Panc1 (cell line): ENCODE measurements at regions of chr5 and their contacts with region 1.

Region 1: DNA sequence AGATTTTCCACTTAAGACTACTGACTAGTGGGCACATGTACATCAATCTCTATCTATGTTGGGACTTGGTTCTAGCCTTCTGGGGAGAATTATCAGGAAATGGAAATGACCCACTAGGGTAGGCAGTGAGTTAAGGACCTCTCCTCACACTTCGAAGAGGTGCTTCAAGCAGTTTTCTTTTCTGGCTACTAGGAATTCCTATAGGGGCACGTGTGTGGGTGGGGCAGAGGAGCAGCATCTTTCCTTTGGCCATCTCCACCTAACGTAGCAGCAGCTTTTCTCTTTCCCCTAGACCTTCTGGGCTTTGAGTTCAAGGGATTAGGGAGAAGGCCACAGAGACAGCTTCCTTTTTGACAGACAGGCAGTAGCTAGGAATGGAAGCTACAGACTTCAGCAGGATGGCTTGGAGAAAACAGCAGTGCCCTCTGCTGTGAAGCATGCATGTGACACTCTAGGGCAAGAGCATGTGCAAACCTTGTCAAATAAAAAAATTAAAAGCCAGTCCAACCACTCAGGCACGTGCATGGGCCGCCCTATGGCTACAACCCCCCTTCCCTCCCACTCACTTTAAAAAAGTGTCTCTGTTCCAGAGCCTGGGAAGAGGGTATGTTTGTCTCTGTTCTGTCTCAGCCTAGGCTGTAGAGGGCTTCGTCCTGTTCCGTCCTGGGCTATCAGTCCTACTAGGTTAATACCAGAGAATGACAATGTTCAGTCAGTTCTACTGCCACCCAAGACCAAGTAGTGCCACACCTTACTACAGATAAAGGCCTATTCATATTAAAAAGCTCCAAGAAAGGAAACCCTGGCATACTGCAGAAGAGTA is 8.7 kb upstream of the GFRA3 start:
- DNase-seq: peak; percentile 13
- ATAC-seq: peak; percentile 94
- H3K4me3 ChIP-seq: no peak overlapping the region
- H3K27ac ChIP-seq: no peak overlapping the region
- H3K4me1 ChIP-seq: no peaks in the 10 kb centered on the region
- H3K27me3 ChIP-seq: no peaks in the 10 kb centered on the region
- CTCF ChIP-seq: peak; percentile 79

Region 2: DNA sequence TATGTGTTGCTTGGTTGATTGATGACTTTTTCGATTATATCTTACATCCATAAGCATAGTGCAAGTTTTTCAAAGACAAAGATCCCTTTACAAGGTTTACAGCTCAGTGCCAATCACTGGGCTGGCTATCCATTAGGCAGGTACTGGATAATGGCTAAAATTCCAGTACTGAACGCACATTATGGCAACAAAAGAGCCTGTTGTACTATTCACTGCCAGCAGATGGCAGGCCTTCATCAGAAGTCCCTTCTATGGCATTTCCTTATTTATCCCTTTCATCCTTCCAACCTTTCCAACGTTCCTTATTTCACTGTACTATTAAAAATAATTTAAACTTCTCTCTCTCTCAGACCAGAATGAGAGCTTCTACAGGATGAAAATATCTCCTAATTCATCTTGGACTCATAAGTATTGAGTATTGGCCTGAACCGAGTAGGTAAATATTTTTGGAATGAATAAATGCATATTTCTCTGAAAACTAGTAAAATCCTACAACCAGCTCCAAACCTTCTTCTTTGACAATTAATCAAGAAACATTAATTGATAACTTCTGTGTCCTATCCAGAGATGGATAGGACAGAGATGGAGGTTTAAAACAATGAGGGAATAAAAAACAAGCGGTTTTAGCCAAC is 205.9 kb before region 1 on chr5:
- CTCF ChIA-PET with region 1: no interaction called
- POLR2A ChIA-PET with region 1: interaction called, 10 read pairs
- in situ Hi-C with region 1: no loop called
- intact Hi-C with region 1: no loop called
- DNase-seq: peak; percentile 66
- ATAC-seq: peak; percentile 92
- H3K4me3 ChIP-seq: no peak overlapping the region
- H3K27ac ChIP-seq: no peak overlapping the region; the same call in 1 of the 2 replicates
- H3K4me1 ChIP-seq: no peaks in the 10 kb centered on the region
- H3K27me3 ChIP-seq: no peaks in the 10 kb centered on the region
- CTCF ChIP-seq: peak; percentile 85

Region 3: DNA sequence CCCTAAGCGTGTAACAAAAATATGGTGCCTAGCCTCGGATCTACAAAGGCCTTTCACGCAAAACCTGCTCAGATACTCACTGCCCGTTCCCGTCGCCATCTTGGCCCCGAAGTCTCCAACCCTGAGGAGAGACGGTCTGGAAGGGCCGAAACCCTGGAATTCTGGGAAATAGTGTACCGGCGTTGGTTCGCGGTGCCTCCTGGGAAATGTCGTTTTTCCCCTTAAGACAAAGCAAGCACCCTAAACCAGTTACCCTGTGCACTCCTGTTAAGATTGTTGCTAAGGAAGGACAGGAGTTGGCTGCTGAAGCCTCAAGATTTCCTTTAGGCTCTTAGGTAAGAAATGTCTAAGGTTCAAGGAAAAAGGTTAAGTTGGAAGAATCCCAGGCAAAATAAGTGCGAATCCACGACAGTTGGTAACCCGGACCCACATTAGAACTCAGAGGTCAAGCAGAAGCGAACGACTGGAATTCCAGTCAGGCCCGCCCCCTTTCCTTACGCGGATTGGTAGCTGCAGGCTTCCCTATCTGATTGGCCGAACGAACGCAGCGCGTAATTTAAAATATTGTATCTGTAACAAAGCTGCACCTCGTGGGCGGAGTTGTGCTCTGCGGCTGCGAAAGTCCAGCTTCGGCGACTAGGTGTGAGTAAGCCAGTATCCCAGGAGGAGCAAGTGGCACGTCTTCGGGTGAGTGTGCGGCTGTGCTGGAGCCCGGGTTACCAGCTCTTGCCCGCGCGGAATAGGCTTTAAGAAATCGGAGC is 104.4 kb before region 1 on chr5 and contains the starts of genes BRD8 and KIF20A:
- CTCF ChIA-PET with region 1: interaction called, 4 read pairs
- POLR2A ChIA-PET with region 1: no interaction called
- in situ Hi-C with region 1: no loop called
- intact Hi-C with region 1: loop called (anchors 2 kb)
- DNase-seq: peak; percentile 98
- ATAC-seq: peak; percentile 94
- H3K4me3 ChIP-seq: peak within 1 kb of the TSS; percentile 93 to 97
- H3K27ac ChIP-seq: peak within 1 kb of the TSS; percentile 100
- H3K4me1 ChIP-seq: peaks cover 22% of the 10 kb centered on the region
- H3K27me3 ChIP-seq: no peaks in the 10 kb centered on the region
- CTCF ChIP-seq: no peak
- total RNA-seq, gene BRD8: 92.1 TPM
- total RNA-seq, gene KIF20A: 55.4 TPM

Region 4: GRCh38 chr5:138223532-138223931 is 59.6 kb before region 1 on chr5:
- CTCF ChIA-PET with region 1: interaction called, 11 read pairs
- POLR2A ChIA-PET with region 1: interaction called, 3 read pairs
- in situ Hi-C with region 1: no loop called
- intact Hi-C with region 1: loop called (anchors 2 kb)
- DNase-seq: no peak
- ATAC-seq: no peak
- H3K4me3 ChIP-seq: no peak overlapping the region
- H3K27ac ChIP-seq: no peak overlapping the region
- H3K4me1 ChIP-seq: no peaks in the 10 kb centered on the region
- H3K27me3 ChIP-seq: no peaks in the 10 kb centered on the region
- CTCF ChIP-seq: no peak

Region 5: GRCh38 chr5:138241688-138242571 is 41.2 kb before region 1 on chr5:
- CTCF ChIA-PET with region 1: interaction called, 15 read pairs
- POLR2A ChIA-PET with region 1: no interaction called
- in situ Hi-C with region 1: no loop called
- intact Hi-C with region 1: no loop called
- DNase-seq: no peak
- ATAC-seq: peak; percentile 86
- H3K4me3 ChIP-seq: peak overlapping the region; percentile 44 to 60
- H3K27ac ChIP-seq: peak overlapping the region; percentile 39
- H3K4me1 ChIP-seq: peaks cover 6% of the 10 kb centered on the region
- H3K27me3 ChIP-seq: peaks cover 10% of the 10 kb centered on the region
- CTCF ChIP-seq: no peak

Region 6: DNA sequence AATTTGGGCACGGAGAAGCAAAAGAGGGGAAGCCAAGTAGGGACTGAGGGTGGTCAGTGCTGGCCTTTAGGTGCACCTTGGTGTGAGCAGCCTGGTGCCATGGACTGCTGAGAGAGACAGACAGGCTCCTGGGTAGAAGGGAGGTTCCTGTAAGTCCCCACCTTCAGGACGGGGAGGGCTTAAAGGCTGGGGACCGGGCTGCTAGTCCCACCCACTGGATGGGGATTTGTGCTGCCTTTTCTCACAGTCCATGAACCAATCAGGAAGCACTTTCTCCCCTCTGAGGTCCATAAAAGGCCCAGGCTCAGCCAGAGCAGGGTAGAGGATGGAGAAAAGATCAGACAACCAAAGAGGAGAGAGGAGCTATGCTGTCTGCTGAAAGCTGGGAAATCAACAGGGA is 33.2 kb after region 1 on chr5:
- CTCF ChIA-PET with region 1: no interaction called
- POLR2A ChIA-PET with region 1: interaction called, 14 read pairs
- in situ Hi-C with region 1: no loop called
- intact Hi-C with region 1: no loop called
- DNase-seq: no peak
- ATAC-seq: peak; percentile 60; the same call in 1 of the 2 replicates
- H3K4me3 ChIP-seq: no peak overlapping the region
- H3K27ac ChIP-seq: no peak overlapping the region
- H3K4me1 ChIP-seq: no peaks in the 10 kb centered on the region
- H3K27me3 ChIP-seq: no peaks in the 10 kb centered on the region
- CTCF ChIP-seq: no peak